Thyroid gland (tissue), 4 donors: ENCODE measurements at regions of chr2 and their contacts with region 1.

Region 1: DNA sequence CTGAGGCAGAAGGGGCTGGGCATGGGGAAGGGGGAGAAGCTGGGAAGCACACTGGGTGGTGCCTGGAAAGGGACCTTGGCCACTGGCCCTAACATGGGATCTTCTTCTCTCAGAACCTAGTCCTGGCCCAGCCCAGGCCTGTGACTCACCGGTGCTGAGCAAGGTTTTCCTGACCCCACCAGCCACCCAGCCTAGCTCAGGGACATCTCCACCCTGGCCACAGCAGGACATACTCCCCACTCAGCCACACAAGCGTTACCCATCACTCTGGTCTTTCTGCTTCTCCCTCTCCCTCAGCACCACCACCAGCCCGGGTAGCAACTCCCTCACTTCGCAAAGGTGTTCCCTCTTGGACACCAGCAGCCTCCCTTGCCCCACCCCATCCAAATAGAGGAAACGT is 22.8 kb downstream of the TNS1 start:
- DNase-seq: peak in 1 of 2 donors; percentile 38
- H3K4me3 ChIP-seq: no peak overlapping the region
- H3K27ac ChIP-seq: peak overlapping the region; percentile 76 to 93 (median 86)
- H3K4me1 ChIP-seq: peaks cover 46 to 60% of the 10 kb centered on the region in 2 donors
- H3K27me3 ChIP-seq: no peaks in the 10 kb centered on the region
- CTCF ChIP-seq: no peak
- POLR2A ChIP-seq: no peak

Region 2: DNA sequence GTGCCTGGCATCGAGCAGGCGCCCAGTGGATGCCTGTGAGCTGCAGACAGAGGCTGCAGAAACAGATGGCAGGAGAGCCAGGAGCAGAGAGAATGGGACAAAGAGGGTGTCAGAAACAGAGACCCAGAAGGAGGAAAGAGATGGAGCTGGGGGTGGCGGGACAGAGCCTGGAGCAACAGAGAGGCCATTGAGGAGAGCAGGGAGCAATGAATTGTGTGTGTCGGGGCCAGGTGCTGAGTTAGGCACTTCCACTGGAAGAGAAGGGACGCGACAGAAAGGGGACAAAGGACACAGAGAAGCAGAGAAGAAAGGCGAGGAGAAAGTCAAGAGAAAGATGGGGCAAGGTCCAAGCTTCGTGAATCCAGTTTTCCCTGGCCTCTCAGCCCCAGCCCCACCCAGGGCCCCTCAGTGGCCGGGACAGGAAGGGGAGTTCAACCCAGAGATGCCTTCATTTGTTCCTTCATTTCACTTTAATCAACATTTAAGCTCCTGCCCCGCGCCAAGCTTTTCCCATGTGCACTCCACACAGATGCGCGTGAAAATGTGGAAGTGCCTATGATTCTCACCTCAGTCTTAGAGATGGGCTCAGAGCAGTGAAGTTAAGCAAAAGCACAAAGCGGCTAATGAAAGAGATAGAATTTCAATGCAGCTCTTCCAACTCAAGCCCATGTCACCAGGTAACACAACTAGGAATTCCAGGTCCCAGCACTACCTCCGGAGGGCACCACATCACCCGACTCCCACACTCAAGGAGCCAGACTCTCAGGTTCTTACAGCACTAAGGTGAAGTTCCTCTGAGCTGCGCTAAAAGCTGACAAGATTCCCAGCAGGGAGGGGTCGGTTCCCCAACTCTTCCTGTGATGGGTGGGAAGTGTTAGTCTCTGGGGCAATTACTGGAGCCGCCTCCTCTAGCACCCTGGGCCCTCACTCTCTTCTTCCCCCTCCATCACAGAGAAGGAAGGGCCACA is 32.4 kb before region 1 on chr2:
- intact Hi-C with region 1: loop called (anchors 5 kb)
- DNase-seq: peak; percentile 56 to 59
- H3K4me3 ChIP-seq: no peak overlapping the region
- H3K27ac ChIP-seq: peak overlapping the region in 1 of 3 donors; percentile 17
- H3K4me1 ChIP-seq: peaks cover 39 to 65% of the 10 kb centered on the region in 2 donors
- H3K27me3 ChIP-seq: no peaks in the 10 kb centered on the region
- CTCF ChIP-seq: peak in 1 of 6 experiments; percentile 15
- POLR2A ChIP-seq: no peak

Region 3: GRCh38 chr2:218081063-218081462 is 101.0 kb after region 1 on chr2:
- intact Hi-C with region 1: no loop called
- DNase-seq: no peak
- H3K4me3 ChIP-seq: no peak overlapping the region
- H3K27ac ChIP-seq: no peak overlapping the region
- H3K4me1 ChIP-seq: no peaks in the 10 kb centered on the region
- H3K27me3 ChIP-seq: no peaks in the 10 kb centered on the region
- CTCF ChIP-seq: no peak
- POLR2A ChIP-seq: no peak